Posterior vena cava (tissue), 2 donors: ENCODE measurements at regions of chr18 and their contacts with region 1.

Region 1: DNA sequence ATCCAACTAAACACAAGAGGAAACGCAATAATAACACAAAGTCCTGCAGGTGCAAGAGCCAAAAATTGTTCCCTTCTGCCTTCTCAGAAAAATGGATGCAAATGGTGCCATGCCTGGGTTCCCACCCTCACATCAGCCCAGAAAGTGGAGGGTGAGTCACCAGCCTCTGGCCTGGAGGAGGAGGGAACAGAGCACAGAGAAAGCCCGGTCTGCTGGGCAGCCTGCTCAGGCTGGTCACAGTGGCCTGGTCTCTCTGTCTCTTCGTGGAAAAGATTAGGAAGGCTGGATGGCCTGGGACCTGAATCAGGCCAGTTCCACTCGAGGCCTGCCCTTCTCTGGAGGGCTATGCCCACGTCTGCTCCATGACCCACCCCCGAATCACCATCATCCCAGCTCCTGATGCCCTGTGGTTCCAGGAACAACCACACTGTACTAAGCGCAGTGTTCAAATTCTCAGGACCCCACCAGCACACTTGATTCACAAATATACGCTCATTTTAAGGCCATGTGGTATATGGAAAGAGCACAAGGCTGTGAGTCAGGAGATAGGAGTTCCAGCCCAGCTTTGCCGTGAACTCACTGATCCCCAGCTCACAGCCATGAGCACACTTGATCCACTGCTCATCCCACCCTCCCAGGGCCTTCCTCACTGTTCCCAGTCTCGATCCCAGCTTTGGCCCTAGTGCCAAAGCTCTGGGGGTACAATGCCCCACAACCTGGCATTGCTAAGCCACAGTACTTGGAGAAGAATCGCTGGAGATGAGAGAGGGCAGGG is 82.1 kb downstream of the ZBTB7C start:
- DNase-seq: peak; percentile 58

Region 2: GRCh38 chr18:48356811-48357631 is 29.9 kb after region 1 on chr18:
- intact Hi-C with region 1: loop called in 1 of 2 experiments (anchors 1 kb)
- DNase-seq: no peak